A673 (cell line): ENCODE measurements at regions of chr1 and their contacts with region 1.

Region 1: DNA sequence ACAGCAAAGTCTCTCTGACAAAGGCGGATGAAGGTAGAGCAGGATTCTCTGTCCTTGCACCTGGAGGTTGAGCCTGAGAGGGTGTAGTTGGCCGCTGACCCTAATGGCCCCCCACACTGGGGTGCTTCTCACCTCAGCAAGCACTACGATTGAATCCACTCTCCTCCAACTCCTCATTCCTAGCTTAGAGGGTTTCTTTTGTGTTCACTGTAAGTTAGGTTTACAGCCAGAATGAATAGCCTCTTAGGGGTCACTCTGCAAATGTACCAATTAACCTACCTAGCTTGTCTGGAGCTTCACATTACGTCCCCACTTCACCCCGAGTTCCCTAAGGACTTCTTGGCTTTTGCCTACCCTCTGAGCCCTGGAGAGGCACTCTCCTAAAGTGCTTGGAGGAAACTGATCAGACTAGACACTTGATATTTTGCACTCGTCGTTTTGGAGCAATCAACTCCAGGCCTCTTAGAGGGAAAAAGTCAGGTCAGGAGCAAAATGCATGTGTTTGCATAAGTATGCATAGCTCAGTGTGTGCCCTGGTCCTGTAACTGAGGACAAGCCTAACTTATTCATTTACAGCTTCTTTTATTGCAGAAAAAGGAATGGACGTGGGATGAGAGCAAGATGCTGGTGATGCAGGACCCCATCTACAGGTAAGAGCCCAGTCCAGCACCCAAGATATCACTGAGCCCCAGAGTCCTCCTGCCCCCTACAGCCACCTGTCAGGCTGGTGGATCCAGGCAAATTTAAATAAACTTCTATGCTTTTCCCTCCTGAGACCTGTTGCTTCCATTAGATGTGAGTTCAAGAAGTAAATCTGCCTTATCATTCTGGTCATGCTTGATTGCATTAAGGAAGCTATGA is 76.4 kb downstream of the SPATA46 start:
- DNase-seq: no peak
- H3K4me3 ChIP-seq: no peak overlapping the region
- H3K27ac ChIP-seq: peak overlapping the region; percentile 12
- H3K4me1 ChIP-seq: peaks cover 49% of the 10 kb centered on the region
- H3K27me3 ChIP-seq: no peaks in the 10 kb centered on the region
- CTCF ChIP-seq: no peak

Region 2: DNA sequence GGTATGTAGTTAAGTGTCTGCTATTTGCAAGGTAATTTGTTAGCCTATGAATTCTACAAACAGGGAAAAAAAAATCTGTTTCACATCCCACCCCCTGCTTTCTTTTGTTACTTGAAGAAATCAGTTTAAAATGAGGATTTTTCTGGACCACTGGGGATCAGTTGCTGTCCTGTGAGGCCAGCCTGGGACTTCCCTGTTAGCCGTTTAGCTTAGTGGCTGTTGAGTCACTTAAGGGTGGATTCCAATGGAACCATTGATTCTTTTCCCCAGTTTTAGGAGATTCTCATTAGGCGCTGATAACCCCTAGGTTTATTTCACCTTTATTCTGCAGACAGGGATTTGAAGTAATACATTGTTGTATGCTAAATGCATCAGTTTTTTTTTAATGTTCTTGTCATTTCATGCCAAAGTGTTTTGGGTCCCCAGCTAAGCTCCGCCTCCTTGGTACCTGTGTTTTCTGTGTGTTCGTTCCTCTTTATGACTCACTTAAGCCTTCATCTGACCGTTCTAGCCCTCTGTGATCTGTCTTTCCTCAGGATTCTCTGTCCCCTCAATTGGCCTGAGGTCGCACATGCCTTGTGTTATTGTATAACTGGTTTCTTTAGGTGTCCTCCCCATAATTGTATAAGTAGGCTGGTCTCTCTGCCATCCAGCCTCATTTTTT is 171.5 kb before region 1 on chr1:
- CTCF ChIA-PET with region 1: interaction called, 11 read pairs
- POLR2A ChIA-PET with region 1: no interaction called
- intact Hi-C with region 1: no loop called
- DNase-seq: no peak
- H3K4me3 ChIP-seq: no peak overlapping the region
- H3K27ac ChIP-seq: no peak overlapping the region
- H3K4me1 ChIP-seq: peaks cover 33% of the 10 kb centered on the region
- H3K27me3 ChIP-seq: no peaks in the 10 kb centered on the region
- CTCF ChIP-seq: no peak